Pancreas (tissue), 10 donors: ENCODE measurements at regions of chr9 and their contacts with region 1.

Region 1: GRCh38 chr9:83569326-83569725 is 31.1 kb upstream of the FRMD3 start:
- DNase-seq: no peak
- ATAC-seq: peak in 1 of 4 donors; percentile 36
- H3K4me3 ChIP-seq: no peak overlapping the region
- H3K27ac ChIP-seq: no peak overlapping the region
- H3K4me1 ChIP-seq: no peaks in the 10 kb centered on the region
- H3K27me3 ChIP-seq: no peaks in the 10 kb centered on the region
- CTCF ChIP-seq: no peak

Region 2: GRCh38 chr9:83509402-83509801 is 59.9 kb before region 1 on chr9:
- intact Hi-C with region 1: loop called in 1 of 3 experiments (anchors 10 kb)
- DNase-seq: no peak
- ATAC-seq: no peak
- H3K4me3 ChIP-seq: no peak overlapping the region
- H3K27ac ChIP-seq: no peak overlapping the region
- H3K4me1 ChIP-seq: no peaks in the 10 kb centered on the region
- H3K27me3 ChIP-seq: no peaks in the 10 kb centered on the region
- CTCF ChIP-seq: no peak

Region 3: GRCh38 chr9:83521411-83521810 is 47.9 kb before region 1 on chr9:
- intact Hi-C with region 1: no loop called
- DNase-seq: no peak
- ATAC-seq: no peak
- H3K4me3 ChIP-seq: no peak overlapping the region
- H3K27ac ChIP-seq: no peak overlapping the region
- H3K4me1 ChIP-seq: no peaks in the 10 kb centered on the region
- H3K27me3 ChIP-seq: no peaks in the 10 kb centered on the region
- CTCF ChIP-seq: no peak